ENCODE measurements at regions of chr2 and their contacts with region 1.

Region 1: DNA sequence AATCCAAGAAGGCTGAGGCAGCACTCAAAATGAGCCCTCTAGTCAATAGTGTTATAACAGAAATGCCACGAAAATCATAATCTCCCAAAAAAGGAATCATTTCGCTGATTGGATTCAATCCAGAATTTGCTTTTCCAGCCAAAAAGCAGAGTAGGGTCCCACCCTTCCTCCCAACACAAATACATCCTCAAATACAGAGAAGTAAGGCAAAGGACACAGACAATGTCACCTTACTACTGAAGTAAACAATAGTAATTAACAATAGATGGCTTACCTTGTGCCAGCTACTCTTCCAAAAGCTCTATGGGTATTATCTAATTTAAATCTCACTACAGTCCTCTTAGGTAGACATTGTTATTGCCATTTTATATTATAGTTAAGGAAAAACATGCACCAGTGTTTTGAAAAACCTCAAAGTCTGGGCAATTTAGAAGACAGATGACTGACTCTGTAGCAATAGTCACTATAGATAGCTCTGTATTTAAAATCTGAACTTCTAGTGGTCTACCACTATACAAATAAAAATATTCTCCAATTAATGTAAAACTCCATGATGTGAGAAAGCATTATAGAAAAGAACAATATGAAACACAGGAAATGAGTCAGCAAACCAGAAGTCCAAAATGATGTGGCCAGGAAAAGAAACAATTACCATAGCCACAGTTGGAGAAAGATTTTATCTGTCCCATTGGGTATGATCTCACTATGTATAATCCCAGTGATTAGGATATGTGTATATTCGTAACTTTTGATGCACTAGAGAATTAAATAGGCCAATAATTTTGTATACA is 305.0 kb upstream of the ERBB4 start:
- DNase-seq: no peak
- H3K4me3 ChIP-seq: no peak overlapping the region
- H3K27ac ChIP-seq: no peak overlapping the region
- H3K4me1 ChIP-seq: no peaks in the 10 kb centered on the region
- H3K27me3 ChIP-seq: peaks cover 0 to 1% (median 0%) of the 10 kb centered on the region in 4 experiments; a peak in 1 of 7 replicates
- CTCF ChIP-seq: no peak
- EP300 ChIP-seq: no peak
- POLR2A ChIP-seq: no peak
- RAD21 ChIP-seq: no peak

Region 2: GRCh38 chr2:212863185-212863588 is 19.6 kb after region 1 on chr2:
- CTCF ChIA-PET with region 1: interaction called, 19 read pairs
- POLR2A ChIA-PET with region 1: no interaction called
- DNase-seq: peak; percentile 29 to 56
- H3K4me3 ChIP-seq: no peak overlapping the region; a peak in 1 of 8 replicates
- H3K27ac ChIP-seq: no peak overlapping the region
- H3K4me1 ChIP-seq: no peaks in the 10 kb centered on the region
- H3K27me3 ChIP-seq: no peaks in the 10 kb centered on the region
- CTCF ChIP-seq: peak; percentile 38 to 84 (median 82)
- EP300 ChIP-seq: no peak
- POLR2A ChIP-seq: no peak
- RAD21 ChIP-seq: peak; percentile 97 to 98

Region 3: DNA sequence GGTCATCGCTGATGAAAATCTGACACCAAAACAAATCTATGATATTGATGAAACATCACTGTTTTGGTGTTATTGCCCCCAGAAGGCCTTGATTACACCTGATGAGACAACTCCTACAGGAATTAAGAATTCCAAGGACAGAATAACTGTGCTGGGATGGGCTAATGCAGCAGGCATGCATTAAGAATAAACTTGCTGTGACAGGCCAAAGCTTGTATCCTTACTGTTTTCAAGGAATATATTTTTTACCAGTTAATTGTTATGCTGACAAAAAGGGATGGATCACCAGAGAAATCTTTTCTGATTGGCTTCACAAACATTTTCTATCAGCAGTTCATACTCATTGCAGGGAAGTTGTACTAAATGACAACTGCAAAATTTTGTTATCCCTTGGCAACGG is 29.7 kb after region 1 on chr2:
- CTCF ChIA-PET with region 1: no interaction called
- POLR2A ChIA-PET with region 1: no interaction called
- DNase-seq: no peak
- H3K4me3 ChIP-seq: no peak overlapping the region
- H3K27ac ChIP-seq: no peak overlapping the region
- H3K4me1 ChIP-seq: no peaks in the 10 kb centered on the region
- H3K27me3 ChIP-seq: no peaks in the 10 kb centered on the region
- CTCF ChIP-seq: no peak
- EP300 ChIP-seq: no peak
- POLR2A ChIP-seq: no peak
- RAD21 ChIP-seq: no peak

Region 4: GRCh38 chr2:212892193-212892592 is 48.6 kb after region 1 on chr2:
- CTCF ChIA-PET with region 1: no interaction called
- POLR2A ChIA-PET with region 1: no interaction called
- DNase-seq: no peak
- H3K4me3 ChIP-seq: no peak overlapping the region
- H3K27ac ChIP-seq: no peak overlapping the region
- H3K4me1 ChIP-seq: no peaks in the 10 kb centered on the region
- H3K27me3 ChIP-seq: no peaks in the 10 kb centered on the region
- CTCF ChIP-seq: peak in 2 of 3 experiments; percentile 47 to 51; a peak in 3 of 4 replicates
- EP300 ChIP-seq: no peak
- POLR2A ChIP-seq: no peak
- RAD21 ChIP-seq: peak; percentile 47 to 62

Region 5: GRCh38 chr2:212912445-212913103 is 69.0 kb after region 1 on chr2:
- CTCF ChIA-PET with region 1: no interaction called
- POLR2A ChIA-PET with region 1: no interaction called
- DNase-seq: no peak
- H3K4me3 ChIP-seq: no peak overlapping the region
- H3K27ac ChIP-seq: no peak overlapping the region
- H3K4me1 ChIP-seq: peaks cover 3 to 11% (median 6%) of the 10 kb centered on the region in 4 experiments; a peak in 5 of 7 replicates
- H3K27me3 ChIP-seq: no peaks in the 10 kb centered on the region
- CTCF ChIP-seq: no peak
- EP300 ChIP-seq: no peak
- POLR2A ChIP-seq: no peak
- RAD21 ChIP-seq: no peak

Measured in H1 (cell line).